Activated CD4-positive, alpha-beta T cell treated with anti-CD3 and anti-CD28 coated beads, Interleukin-2, amount 10 ng/mL, durations not matched to agents 24 days and 14 days (primary cell): ENCODE measurements at regions of chr3 and their contacts with region 1.

Region 1: GRCh38 chr3:69200384-69201068 is 78.1 kb upstream of the LMOD3 start:
- DNase-seq: peak; percentile 83
- H3K4me3 Mint-ChIP-seq: peak overlapping the region; percentile 90
- H3K27ac Mint-ChIP-seq: peak overlapping the region; percentile 99
- H3K4me1 Mint-ChIP-seq: peaks cover 59% of the 10 kb centered on the region
- H3K27me3 Mint-ChIP-seq: no peaks in the 10 kb centered on the region

Region 2: GRCh38 chr3:69013253-69014021 is 187.1 kb before region 1 on chr3 and contains the start of gene EOGT:
- intact Hi-C with region 1: no loop called
- DNase-seq: peak; percentile 95
- H3K4me3 Mint-ChIP-seq: peak within 1 kb of the TSS; percentile 85
- H3K27ac Mint-ChIP-seq: peak within 1 kb of the TSS; percentile 90
- H3K4me1 Mint-ChIP-seq: peaks cover 15% of the 10 kb centered on the region
- H3K27me3 Mint-ChIP-seq: no peaks in the 10 kb centered on the region
- total RNA-seq, gene EOGT: 12.6 and 13.5 TPM in 2 replicates

Region 3: GRCh38 chr3:69084326-69085167 is 116.0 kb before region 1 on chr3 and contains the start of gene ARL6IP5:
- intact Hi-C with region 1: loop called (anchors 1 kb)
- DNase-seq: peak; percentile 97
- H3K4me3 Mint-ChIP-seq: peak within 1 kb of the TSS; percentile 96
- H3K27ac Mint-ChIP-seq: peak within 1 kb of the TSS; percentile 95
- H3K4me1 Mint-ChIP-seq: peaks cover 45% of the 10 kb centered on the region
- H3K27me3 Mint-ChIP-seq: no peaks in the 10 kb centered on the region
- total RNA-seq, gene ARL6IP5: 118 and 122 TPM in 2 replicates

Region 4: GRCh38 chr3:69161587-69162307 is 38.8 kb before region 1 on chr3:
- intact Hi-C with region 1: loop called (anchors 2 kb)
- DNase-seq: peak; percentile 81
- H3K4me3 Mint-ChIP-seq: no peak overlapping the region
- H3K27ac Mint-ChIP-seq: no peak overlapping the region
- H3K4me1 Mint-ChIP-seq: peaks cover 2% of the 10 kb centered on the region
- H3K27me3 Mint-ChIP-seq: peaks cover 6% of the 10 kb centered on the region

Region 5: GRCh38 chr3:69172058-69172457 is 28.5 kb before region 1 on chr3:
- intact Hi-C with region 1: no loop called
- DNase-seq: no peak
- H3K4me3 Mint-ChIP-seq: no peak overlapping the region
- H3K27ac Mint-ChIP-seq: no peak overlapping the region
- H3K4me1 Mint-ChIP-seq: peaks cover 3% of the 10 kb centered on the region
- H3K27me3 Mint-ChIP-seq: no peaks in the 10 kb centered on the region

Region 6: GRCh38 chr3:69212411-69213139 is 12.0 kb after region 1 on chr3:
- intact Hi-C with region 1: loop called (anchors 1 kb)
- DNase-seq: peak; percentile 71
- H3K4me3 Mint-ChIP-seq: peak overlapping the region; percentile 62
- H3K27ac Mint-ChIP-seq: peak overlapping the region; percentile 90
- H3K4me1 Mint-ChIP-seq: peaks cover 50% of the 10 kb centered on the region
- H3K27me3 Mint-ChIP-seq: no peaks in the 10 kb centered on the region

Region 7: GRCh38 chr3:69282181-69282580 is 81.7 kb after region 1 on chr3:
- intact Hi-C with region 1: loop called (anchors 1 kb)
- DNase-seq: peak; percentile 69
- H3K4me3 Mint-ChIP-seq: peak overlapping the region; percentile 50
- H3K27ac Mint-ChIP-seq: peak overlapping the region; percentile 87
- H3K4me1 Mint-ChIP-seq: peaks cover 18% of the 10 kb centered on the region
- H3K27me3 Mint-ChIP-seq: peaks cover under 1% of the 10 kb centered on the region